ENCODE measurements at regions of chr15 and their contacts with region 1.

Region 1: DNA sequence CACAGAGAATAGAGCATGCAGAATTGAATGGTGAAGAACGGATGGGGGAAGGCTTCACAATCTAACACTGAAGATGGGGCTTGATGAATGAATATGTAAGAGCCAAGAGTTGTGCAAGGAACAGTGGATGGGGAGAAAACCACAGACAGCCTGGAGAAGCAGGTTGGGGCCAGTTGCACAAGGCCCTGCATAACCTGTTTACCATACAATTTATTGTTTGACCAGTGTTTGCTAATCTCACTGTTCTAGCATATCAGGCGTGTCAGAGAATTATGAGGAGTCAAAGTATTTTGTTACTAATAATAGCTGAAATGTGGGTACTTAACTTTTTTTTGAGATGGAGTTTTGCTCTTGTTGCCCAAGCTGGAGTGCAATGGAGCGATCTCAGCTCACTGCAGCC is 36.4 kb downstream of the LINS1 start:
- DNase-seq: no peak

Region 2: GRCh38 chr15:100111103-100112060 is 454.2 kb before region 1 on chr15:
- intact Hi-C with region 1: no loop called
- DNase-seq: peak; percentile 90

Region 3: DNA sequence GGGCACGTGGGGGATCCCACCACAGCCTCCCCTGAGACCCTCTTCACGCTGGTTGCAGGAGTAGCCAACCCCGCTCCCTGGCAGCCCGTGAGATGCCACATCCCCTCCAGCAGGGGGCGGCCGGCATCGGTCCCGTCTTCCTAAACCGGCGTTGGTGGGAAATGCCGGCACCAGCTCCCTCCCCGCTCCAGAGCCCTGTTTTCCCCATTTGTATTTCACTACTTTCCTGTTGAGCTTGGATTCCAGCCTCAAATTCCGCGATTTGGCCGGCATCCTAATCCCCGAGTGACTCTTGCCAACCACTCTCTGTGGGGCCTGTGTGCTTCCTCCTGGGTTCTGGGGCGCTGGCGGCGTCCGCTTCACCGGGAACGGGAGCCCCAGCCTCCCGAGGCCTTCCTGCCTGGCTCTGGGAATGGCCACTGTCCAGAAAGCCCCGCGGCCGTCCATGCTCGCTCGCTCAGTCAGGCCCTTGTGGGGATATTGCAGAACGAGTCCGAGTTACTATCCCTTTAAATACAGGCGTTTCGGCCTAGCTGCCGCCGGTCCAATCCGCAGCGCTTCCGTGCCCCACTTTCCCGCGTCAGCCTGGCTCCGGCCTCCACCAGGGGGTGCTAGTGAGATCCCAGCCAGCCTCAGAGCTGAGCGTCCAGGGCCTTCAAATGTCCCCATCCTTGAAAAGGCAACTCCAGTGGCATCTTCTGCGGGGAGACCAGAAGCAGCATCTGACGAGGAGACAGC is 215.7 kb before region 1 on chr15:
- intact Hi-C with region 1: loop called in 1 of 2 experiments (anchors 10 kb)
- DNase-seq: peak; percentile 98

Region 4: DNA sequence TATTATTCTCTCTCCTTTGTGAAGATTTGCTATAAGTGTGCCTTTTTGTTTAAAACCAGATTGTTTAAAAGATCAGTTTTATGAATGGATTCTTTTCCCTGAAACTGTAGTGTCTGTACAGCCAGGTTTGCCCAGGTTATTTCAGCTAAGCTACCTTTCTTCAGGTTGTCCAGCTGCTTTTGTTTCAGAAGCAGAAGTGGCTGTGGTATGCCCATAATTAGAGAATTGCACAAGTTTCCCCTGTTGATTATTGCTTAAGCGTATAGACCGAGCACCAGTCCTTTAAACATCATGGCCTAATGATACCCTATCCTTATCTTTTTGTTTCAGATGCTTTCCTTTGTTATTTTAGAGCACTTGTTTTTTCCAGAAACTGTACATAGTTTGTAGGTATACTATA is 46.9 kb after region 1 on chr15:
- intact Hi-C with region 1: no loop called
- DNase-seq: no peak

Region 5: GRCh38 chr15:100627789-100628395 is 62.3 kb after region 1 on chr15:
- intact Hi-C with region 1: no loop called
- DNase-seq: no peak

Region 6: DNA sequence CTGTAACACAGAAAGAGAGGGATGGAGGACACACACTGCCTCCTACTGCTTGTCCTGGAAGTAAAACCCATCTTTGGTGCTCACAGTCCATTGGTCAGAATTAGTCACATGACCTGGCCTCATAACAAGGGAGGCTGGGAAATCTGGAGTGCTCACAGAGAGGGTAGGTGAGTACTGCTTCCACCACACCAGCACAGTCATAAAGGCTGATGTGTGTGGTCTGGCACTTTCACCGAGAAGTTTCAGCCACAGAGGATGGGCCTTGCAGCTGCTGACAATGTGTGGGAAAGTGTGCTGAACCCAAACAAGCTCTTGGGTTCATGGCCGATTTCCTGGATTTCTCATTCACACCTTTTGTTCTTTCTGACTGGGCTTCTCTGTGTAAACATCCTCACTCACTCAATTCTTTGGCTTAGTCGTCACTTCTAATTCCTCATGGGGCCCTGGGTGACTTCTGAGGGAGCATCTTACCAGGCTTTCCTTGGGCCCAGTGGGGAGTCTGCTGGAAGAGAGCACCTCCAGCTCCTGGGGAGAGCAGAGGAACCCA is 137.5 kb after region 1 on chr15:
- intact Hi-C with region 1: no loop called
- DNase-seq: no peak

Measured in posterior vena cava (tissue), 2 donors.